ENCODE measurements at regions of chr1 and their contacts with region 1.

Region 1: GRCh38 chr1:25796811-25797458 is 3.1 kb upstream of the SELENON start:
- DNase-seq: peak; percentile 93
- ATAC-seq: peak; percentile 69
- H3K4me3 ChIP-seq: peak overlapping the region; percentile 14
- H3K27ac ChIP-seq: peak overlapping the region; percentile 44
- H3K4me1 ChIP-seq: peaks cover 40% of the 10 kb centered on the region
- H3K27me3 ChIP-seq: no peaks in the 10 kb centered on the region
- CTCF ChIP-seq: peak; percentile 69

Region 2: DNA sequence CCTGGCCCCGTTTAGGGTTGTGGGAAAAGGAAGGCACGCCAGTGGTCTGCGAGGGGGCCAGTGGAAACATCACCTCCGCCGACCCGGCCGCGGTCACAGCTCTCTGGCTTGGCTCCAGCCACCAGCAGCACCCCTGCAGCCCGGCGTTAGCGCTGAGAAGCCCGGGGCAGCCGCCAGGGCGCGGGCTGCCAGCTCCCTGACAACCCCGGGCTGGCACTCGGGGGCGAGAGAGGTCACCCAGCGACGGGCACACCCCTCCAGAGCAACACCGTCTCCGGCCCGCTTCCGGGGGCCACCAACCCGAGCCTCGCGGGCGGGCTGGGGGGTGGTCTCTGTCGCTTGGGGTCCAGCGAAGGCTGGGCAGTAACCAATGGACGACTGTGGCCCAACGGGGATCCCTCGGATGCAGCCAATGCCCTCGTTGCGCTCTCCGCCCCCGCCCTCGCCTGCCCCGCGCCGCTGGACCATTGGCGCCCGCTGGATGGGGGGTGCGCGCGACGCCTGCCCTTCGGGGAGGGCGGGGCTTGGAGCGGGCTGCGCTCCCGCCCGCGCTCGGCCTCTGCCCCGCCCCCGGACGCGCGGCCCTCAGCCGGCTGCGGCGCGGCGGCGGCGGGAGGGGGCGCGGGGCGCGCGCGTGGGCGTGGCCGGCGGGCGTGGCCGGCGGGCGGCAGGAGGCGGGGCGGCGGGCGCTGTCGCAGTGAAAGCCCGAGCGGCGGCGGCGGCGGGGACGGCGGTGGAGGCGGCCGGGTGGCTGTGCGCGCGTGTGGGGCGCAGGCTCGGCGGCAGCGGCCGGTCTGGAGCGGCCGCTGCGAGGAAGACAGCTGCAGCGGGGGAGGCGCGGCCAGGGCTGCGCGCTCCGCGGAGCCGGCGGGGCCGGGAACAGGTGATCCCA is 180.6 kb before region 1 on chr1 and contains the start of gene MAN1C1:
- intact Hi-C with region 1: loop called (anchors 10 kb)
- DNase-seq: peak; percentile 95
- ATAC-seq: peak; percentile 96
- H3K4me3 ChIP-seq: peak within 1 kb of the TSS; percentile 85
- H3K27ac ChIP-seq: peak within 1 kb of the TSS; percentile 72
- H3K4me1 ChIP-seq: peaks cover 20% of the 10 kb centered on the region
- H3K27me3 ChIP-seq: no peaks in the 10 kb centered on the region
- CTCF ChIP-seq: peak; percentile 51
- total RNA-seq, gene MAN1C1: 19.7 TPM

Measured in upper lobe of right lung (tissue), 1 donor.